ENCODE measurements at regions of chr2 and their contacts with region 1.

Region 1: GRCh38 chr2:231917280-231918066 is 8.7 kb downstream of the NPPC start:
- DNase-seq: no peak
- H3K27ac ChIP-seq: no peak overlapping the region
- CTCF ChIP-seq: no peak

Region 2: DNA sequence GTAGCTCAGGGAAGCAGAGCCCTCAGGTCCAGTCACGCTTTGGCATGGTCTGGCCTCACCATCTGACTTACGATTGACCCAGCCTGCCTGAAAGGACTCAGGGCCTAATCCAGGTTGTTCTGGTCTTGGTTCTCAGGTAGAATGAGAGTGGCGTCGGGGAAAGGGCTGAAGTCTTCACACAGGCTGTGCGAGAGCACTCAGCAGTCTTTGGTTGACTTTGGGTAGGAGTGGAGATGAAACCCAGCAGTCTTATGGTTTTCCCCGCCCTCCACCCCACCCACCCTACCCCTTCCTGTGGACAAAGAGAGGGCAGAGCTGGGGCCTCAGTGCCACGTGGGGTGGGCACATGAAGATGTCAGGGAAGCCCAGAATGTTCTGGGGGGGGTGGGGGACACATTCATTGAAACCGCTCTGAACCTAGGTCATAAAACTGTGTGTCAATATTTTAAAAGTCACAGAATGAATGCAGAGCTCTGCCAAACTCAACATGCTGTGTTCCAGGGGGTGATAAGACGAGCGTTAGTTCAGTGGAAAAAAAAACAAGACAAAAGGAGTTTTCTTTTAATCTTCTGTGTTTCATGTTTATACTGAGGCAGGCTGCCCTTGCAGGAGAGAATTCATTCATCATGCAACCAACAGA is 402.4 kb after region 1 on chr2:
- CTCF ChIA-PET with region 1: interaction called, 12 read pairs
- POLR2A ChIA-PET with region 1: no interaction called
- DNase-seq: no peak
- H3K27ac ChIP-seq: no peak overlapping the region
- CTCF ChIP-seq: no peak

Measured in RWPE1 (cell line).